Activated naive CD4-positive, alpha-beta T cell treated with anti-CD3 and anti-CD28 coated beads for 36 hours (primary cell): ENCODE measurements at regions of chr12 and their contacts with region 1.

Region 1: GRCh38 chr12:109982210-109982609 is 14.0 kb downstream of the GIT2 start:
- DNase-seq: no peak
- H3K4me3 Mint-ChIP-seq: no peak overlapping the region
- H3K27ac Mint-ChIP-seq: no peak overlapping the region
- H3K4me1 Mint-ChIP-seq: peaks cover 66% of the 10 kb centered on the region
- H3K27me3 Mint-ChIP-seq: no peaks in the 10 kb centered on the region

Region 2: GRCh38 chr12:109804820-109805761 is 177.1 kb before region 1 on chr12:
- CTCF ChIA-PET with region 1: no interaction called
- intact Hi-C with region 1: no loop called
- DNase-seq: peak; percentile 74
- H3K4me3 Mint-ChIP-seq: no peak overlapping the region
- H3K27ac Mint-ChIP-seq: no peak overlapping the region
- H3K4me1 Mint-ChIP-seq: no peaks in the 10 kb centered on the region
- H3K27me3 Mint-ChIP-seq: no peaks in the 10 kb centered on the region

Region 3: DNA sequence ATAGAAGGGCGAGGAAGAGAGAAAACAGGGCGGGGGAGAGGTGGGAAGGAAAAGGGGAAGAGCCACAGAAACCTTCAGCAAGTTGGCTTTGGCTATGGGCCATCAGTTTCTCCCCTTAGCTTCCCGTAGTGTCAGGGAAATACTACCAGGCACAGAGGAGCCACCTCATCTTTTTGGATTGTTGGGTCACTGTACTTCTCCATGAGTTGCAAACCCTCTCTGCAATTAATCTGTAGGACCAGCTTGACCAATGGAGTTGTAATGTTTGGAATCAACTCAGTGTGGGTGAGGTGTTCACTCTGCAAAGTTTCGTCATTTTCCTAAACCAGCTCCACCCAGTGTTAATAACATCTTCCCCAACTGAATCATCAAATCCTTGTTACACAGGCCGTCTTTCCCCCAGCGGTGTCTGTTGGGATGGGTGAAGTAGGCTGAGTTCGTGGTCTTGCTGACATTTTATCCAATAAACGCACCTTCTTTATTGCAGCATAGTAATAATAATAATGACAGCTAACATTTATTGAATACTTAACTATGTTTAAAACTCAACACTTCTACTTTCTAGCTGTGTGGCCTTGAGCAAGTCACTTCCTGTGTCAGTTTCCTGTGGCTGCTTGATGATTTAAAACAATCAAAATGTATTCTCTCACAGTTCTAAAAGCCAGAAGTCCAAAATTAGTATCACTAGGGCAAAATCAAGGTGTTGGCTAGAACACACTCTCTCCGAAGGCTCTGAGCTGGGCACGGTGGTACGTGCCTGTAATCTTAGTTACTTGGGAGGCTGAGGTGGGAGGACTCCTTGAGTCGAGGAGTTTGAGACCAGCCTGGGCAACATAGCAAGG is 93.8 kb before region 1 on chr12:
- CTCF ChIA-PET with region 1: no interaction called
- intact Hi-C with region 1: loop called (anchors 1 kb)
- DNase-seq: peak; percentile 73
- H3K4me3 Mint-ChIP-seq: peak overlapping the region; percentile 39
- H3K27ac Mint-ChIP-seq: peak overlapping the region; percentile 93
- H3K4me1 Mint-ChIP-seq: peaks cover 35% of the 10 kb centered on the region
- H3K27me3 Mint-ChIP-seq: no peaks in the 10 kb centered on the region

Region 4: DNA sequence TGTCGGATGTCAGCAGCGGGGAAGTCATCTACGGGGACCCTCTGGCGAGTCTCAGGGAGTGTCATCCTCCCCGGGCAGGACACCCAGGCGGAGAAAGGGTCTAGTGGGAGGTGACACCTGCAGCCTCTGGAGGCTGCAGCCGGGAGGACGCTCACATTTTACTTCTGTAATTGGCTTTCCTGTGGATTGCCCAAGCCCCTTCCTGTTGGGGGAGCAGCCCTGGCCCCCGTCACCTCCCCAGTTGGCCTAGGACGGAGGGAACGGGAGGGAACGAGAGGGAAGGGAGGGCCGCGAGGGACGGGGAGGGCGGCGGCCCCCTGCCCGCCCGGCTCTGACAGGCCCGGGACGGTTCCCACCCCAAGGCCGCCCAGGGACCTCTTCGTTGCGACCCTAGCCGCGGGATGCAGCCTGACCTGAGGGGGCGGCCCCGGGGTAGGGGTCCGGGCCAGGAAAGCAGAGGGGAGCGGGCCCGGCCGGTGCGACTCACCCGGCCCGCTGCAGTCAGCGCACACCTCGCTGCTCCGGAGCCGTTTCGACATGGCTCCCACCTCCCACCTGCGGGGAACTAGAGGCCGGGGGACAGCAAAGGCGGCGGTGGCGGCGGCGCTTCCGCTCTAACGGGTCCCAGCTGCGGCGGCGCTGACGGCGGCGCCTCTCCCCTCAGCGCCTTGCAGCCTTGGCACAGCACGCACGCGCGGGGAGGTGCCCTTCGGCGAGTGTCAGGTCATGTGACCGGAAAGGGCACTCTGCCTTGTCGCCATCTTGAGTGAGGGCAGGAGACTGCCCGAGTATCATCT is 13.7 kb after region 1 on chr12 and contains the start of gene GIT2:
- CTCF ChIA-PET with region 1: interaction called, 5 read pairs
- intact Hi-C with region 1: loop called (anchors 1 kb)
- DNase-seq: peak; percentile 96
- H3K4me3 Mint-ChIP-seq: peak within 1 kb of the TSS; percentile 94
- H3K27ac Mint-ChIP-seq: peak within 1 kb of the TSS; percentile 93
- H3K4me1 Mint-ChIP-seq: peaks cover 54% of the 10 kb centered on the region
- H3K27me3 Mint-ChIP-seq: no peaks in the 10 kb centered on the region
- total RNA-seq, gene GIT2: 40.2 to 41.6 TPM

Region 5: DNA sequence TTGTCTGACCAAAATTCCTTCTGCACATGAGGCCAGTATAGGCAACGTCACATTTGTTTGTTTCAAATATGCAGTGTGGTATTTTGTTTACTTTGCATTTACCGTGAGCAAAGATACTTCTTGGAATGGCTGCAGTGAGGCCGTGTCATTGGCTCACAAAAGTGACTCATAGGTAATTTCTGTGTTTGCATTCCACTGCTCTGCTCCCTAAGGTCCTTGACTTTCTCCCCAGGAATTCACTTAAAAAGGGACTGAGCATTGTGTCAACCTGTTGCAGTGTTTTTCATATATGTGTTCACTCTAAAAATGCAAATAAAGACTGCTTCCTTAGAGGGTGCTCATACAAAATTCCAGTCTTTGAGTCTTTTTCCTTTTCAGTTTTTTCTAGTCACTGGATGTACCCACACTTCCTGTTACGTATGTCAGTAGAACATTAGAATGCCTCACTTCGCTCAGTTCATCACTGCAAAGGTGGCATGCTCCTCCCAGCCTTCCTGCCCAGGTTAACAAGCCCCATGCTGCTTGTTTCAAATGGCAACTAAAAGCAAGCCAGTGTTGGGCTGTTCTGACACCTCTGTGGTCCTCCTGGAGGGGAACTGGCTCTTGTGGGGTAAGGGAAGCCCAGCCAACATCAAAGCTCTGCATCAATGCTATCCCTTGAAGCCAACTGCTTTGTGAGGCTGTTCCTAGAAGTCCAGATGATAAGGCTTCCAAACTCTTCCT is 57.0 kb after region 1 on chr12:
- CTCF ChIA-PET with region 1: interaction called, 4 read pairs
- intact Hi-C with region 1: loop called (anchors 2 kb)
- DNase-seq: peak; percentile 69
- H3K4me3 Mint-ChIP-seq: no peak overlapping the region
- H3K27ac Mint-ChIP-seq: peak overlapping the region; percentile 89
- H3K4me1 Mint-ChIP-seq: peaks cover 38% of the 10 kb centered on the region
- H3K27me3 Mint-ChIP-seq: no peaks in the 10 kb centered on the region

Region 6: DNA sequence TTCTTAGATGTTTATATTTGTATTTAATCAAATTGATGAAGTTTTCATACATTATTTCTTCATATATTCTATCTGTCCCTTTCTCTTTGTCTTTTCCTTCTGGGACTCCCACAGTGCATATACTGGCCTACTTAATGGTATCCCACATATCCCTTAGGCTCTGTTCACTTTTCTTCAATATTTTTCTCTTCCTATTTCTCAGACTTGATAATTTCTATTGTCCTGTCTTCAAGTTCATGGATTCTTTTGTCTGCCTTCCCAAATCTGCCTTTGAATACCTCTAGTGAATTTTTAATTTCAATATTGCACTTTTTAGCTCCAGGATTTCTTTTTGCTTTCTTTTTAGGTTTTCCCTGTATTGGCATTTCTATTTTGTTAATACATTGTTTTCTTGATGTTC is 175.3 kb after region 1 on chr12:
- CTCF ChIA-PET with region 1: no interaction called
- intact Hi-C with region 1: no loop called
- DNase-seq: no peak
- H3K4me3 Mint-ChIP-seq: no peak overlapping the region
- H3K27ac Mint-ChIP-seq: no peak overlapping the region
- H3K4me1 Mint-ChIP-seq: peaks cover 3% of the 10 kb centered on the region
- H3K27me3 Mint-ChIP-seq: no peaks in the 10 kb centered on the region

Region 7: GRCh38 chr12:110776410-110776809 is 794.2 kb after region 1 on chr12:
- CTCF ChIA-PET with region 1: no interaction called
- intact Hi-C with region 1: no loop called
- DNase-seq: peak; percentile 85
- H3K4me3 Mint-ChIP-seq: peak overlapping the region; percentile 60
- H3K27ac Mint-ChIP-seq: peak overlapping the region; percentile 94
- H3K4me1 Mint-ChIP-seq: peaks cover 77% of the 10 kb centered on the region
- H3K27me3 Mint-ChIP-seq: no peaks in the 10 kb centered on the region